ENCODE measurements at regions of chr19 and their contacts with region 1.

Region 1: GRCh38 chr19:48492925-48493717 is 18.5 kb downstream of the LMTK3 start:
- DNase-seq: peak; percentile 91 to 96 (median 96)
- H3K4me3 ChIP-seq: peak overlapping the region; percentile 19 to 81 (median 64)
- H3K27ac ChIP-seq: peak overlapping the region in 1 of 2 experiments; percentile 43
- H3K4me1 ChIP-seq: peaks cover 0 to 45% (median 36%) of the 10 kb centered on the region in 4 experiments
- H3K27me3 ChIP-seq: peaks cover 0 to 29% (median 3%) of the 10 kb centered on the region in 5 experiments

Region 2: GRCh38 chr19:48480558-48481500 is 12.3 kb before region 1 on chr19:
- CTCF ChIA-PET with region 1: interaction called, 13 read pairs
- POLR2A ChIA-PET with region 1: no interaction called
- DNase-seq: peak in 2 of 3 donors; percentile 55 to 67
- H3K4me3 ChIP-seq: peak overlapping the region; percentile 38 to 87 (median 62)
- H3K27ac ChIP-seq: peak overlapping the region in 1 of 2 experiments; percentile 67
- H3K4me1 ChIP-seq: peaks cover 0 to 21% (median 13%) of the 10 kb centered on the region in 4 experiments
- H3K27me3 ChIP-seq: no peaks in the 10 kb centered on the region

Measured in common myeloid progenitor, CD34-positive (primary cell).